ENCODE measurements at regions of chr5 and their contacts with region 1.

Region 1: DNA sequence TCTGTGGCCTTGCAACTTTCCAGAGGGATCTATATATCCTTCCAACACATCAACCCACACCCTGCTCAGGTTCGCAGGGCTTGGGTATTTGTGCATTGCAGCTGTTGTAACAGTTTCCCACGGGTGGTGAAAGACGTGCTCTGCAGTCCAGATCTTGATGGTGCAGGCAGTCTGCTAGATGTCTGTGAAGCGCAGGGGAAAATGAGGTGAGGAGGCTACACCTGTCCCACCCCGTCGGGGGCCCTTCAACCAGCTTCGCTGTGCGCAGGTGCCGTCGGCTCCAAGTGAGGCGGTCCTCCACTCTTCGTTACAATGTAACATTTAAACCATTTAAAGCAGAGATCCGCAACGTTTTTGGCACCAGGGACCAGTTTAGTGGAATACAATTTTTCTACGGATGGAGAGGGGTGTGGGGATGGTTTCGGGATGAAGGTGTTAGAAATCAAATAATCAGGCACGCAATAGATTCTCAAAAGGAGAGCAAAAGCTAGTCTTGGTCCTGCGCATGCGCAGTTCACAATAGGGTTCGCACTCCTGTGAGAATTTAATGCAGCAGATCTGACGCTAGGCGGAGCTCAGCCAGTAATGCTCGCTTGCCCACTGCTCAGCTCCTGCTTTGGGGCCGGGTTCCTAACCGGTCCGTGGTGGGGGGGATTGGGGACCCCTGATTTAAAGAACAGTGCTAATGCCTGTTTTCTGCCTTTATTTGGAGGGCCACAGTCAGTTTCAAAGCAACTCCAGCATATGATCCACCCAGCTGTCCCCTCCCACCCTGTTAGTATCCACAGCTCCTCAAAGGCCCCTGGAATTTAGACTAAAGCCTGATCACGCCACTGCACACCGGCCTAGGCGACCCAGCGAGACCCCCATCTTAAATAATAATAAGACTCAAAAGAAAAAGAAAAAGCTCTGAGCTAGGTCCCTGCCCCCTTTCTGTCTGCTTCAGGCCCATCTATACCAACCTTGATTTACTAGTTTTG is 97.1 kb upstream of the SELENOP start:
- DNase-seq: peak; percentile 89
- ATAC-seq: peak; percentile 96
- H3K4me3 Mint-ChIP-seq: peak overlapping the region; percentile 78
- H3K27ac Mint-ChIP-seq: no peak overlapping the region
- H3K4me1 Mint-ChIP-seq: peaks cover 12% of the 10 kb centered on the region
- H3K27me3 Mint-ChIP-seq: peaks cover 47% of the 10 kb centered on the region
- CTCF ChIP-seq: peak; percentile 38; the same call in 1 of the 2 replicates

Region 2: DNA sequence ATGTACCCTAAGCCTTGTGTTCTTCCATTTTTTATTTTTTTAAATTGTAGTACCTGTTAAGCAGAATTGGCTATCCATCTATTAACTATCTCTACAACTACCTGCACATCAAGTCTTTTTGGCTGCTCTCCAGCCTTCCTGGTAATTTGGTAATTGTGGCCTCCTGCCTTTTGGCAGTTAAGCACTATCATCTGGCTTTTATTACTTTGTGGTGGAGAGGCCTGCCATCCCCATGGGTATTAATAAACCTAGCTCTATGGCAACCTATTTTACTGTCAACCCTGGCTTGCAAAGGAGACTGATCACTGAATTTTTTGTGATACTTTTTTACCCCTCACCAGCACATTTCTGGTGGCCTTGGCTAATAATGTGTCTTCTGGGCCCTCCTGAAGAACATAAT is 117.6 kb before region 1 on chr5:
- CTCF ChIA-PET with region 1: no interaction called
- POLR2A ChIA-PET with region 1: no interaction called
- DNase-seq: no peak
- ATAC-seq: no peak
- H3K4me3 Mint-ChIP-seq: no peak overlapping the region
- H3K27ac Mint-ChIP-seq: no peak overlapping the region
- H3K4me1 Mint-ChIP-seq: no peaks in the 10 kb centered on the region
- H3K27me3 Mint-ChIP-seq: no peaks in the 10 kb centered on the region
- CTCF ChIP-seq: no peak

Region 3: GRCh38 chr5:42807722-42808447 is 100.9 kb before region 1 on chr5:
- CTCF ChIA-PET with region 1: no interaction called
- POLR2A ChIA-PET with region 1: no interaction called
- DNase-seq: no peak
- ATAC-seq: peak; percentile 27; the same call in 1 of the 2 replicates
- H3K4me3 Mint-ChIP-seq: no peak overlapping the region
- H3K27ac Mint-ChIP-seq: no peak overlapping the region
- H3K4me1 Mint-ChIP-seq: peaks cover 19% of the 10 kb centered on the region
- H3K27me3 Mint-ChIP-seq: no peaks in the 10 kb centered on the region
- CTCF ChIP-seq: no peak

Region 4: GRCh38 chr5:42943931-42944631 is 35.3 kb after region 1 on chr5:
- CTCF ChIA-PET with region 1: interaction called, 16 read pairs
- POLR2A ChIA-PET with region 1: no interaction called
- DNase-seq: peak; percentile 42
- ATAC-seq: peak; percentile 90
- H3K4me3 Mint-ChIP-seq: peak overlapping the region; percentile 64
- H3K27ac Mint-ChIP-seq: no peak overlapping the region
- H3K4me1 Mint-ChIP-seq: peaks cover 23% of the 10 kb centered on the region
- H3K27me3 Mint-ChIP-seq: peaks cover 31% of the 10 kb centered on the region
- CTCF ChIP-seq: no peak

Region 5: GRCh38 chr5:43008369-43009153 is 99.8 kb after region 1 on chr5:
- CTCF ChIA-PET with region 1: interaction called, 10 read pairs
- POLR2A ChIA-PET with region 1: no interaction called
- DNase-seq: peak; percentile 90
- ATAC-seq: peak; percentile 74
- H3K4me3 Mint-ChIP-seq: peak overlapping the region; percentile 78
- H3K27ac Mint-ChIP-seq: peak overlapping the region; percentile 92
- H3K4me1 Mint-ChIP-seq: peaks cover 34% of the 10 kb centered on the region
- H3K27me3 Mint-ChIP-seq: peaks cover 90% of the 10 kb centered on the region
- CTCF ChIP-seq: no peak

Region 6: DNA sequence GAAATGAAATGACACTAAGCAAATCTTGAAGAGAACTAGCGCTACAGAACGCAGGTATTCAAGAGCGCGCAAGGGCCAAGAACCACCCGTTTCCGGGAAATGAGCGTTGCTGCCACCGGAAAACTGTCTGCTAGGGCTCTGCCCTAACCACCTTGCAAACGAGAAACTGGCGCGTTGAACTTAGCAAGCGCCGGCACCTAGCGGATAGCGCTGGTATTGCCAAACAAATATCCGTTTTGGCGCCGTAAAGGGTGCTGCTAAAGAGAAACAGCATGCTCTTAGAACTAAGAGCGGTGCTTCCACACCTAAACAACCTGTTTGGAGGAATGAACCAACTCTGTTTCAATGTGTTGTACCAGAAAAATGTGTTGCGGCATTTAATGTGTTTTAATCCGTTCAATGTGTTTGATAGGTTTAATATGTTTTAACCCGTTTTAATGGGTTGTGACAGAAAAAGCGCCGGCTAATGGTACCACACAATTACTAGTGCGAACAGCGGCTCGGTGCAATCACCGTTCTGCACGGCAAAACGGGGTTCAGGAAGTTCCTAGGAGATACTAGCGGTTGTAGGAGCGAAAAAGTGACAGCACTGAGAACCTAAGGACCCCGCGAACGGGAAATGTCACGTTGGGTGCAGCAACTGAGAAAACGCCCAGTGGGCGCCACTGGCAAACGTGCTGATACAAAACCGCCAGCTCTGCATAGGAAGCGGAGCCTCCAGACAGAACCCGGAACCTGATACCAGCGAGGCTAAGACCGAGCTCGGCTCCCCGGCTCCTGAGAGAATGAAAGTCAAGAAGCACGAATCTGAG is 131.7 kb after region 1 on chr5 and contains the start of gene ANXA2R:
- CTCF ChIA-PET with region 1: interaction called, 14 read pairs
- POLR2A ChIA-PET with region 1: no interaction called
- DNase-seq: peak; percentile 91
- ATAC-seq: peak; percentile 47
- H3K4me3 Mint-ChIP-seq: peak within 1 kb of the TSS; percentile 74
- H3K27ac Mint-ChIP-seq: no peak within 1 kb of the TSS
- H3K4me1 Mint-ChIP-seq: peaks cover 63% of the 10 kb centered on the region
- H3K27me3 Mint-ChIP-seq: peaks cover 95% of the 10 kb centered on the region
- CTCF ChIP-seq: peak; percentile 78
- total RNA-seq, gene ANXA2R: 0.72 to 1.1 TPM (median 0.96 TPM) in 3 replicates

Measured in WTC11 (cell line).